PC-9 (cell line): ENCODE measurements at regions of chr20 and their contacts with region 1.

Region 1: GRCh38 chr20:36093025-36093803 is 61.3 kb upstream of the EPB41L1 start:
- DNase-seq: peak in 1 of 2 experiments; percentile 54
- H3K4me3 ChIP-seq: peak overlapping the region; percentile 95
- H3K27ac ChIP-seq: no peak overlapping the region
- H3K4me1 ChIP-seq: peaks cover 58% of the 10 kb centered on the region
- H3K27me3 ChIP-seq: no peaks in the 10 kb centered on the region
- CTCF ChIP-seq: no peak

Region 2: DNA sequence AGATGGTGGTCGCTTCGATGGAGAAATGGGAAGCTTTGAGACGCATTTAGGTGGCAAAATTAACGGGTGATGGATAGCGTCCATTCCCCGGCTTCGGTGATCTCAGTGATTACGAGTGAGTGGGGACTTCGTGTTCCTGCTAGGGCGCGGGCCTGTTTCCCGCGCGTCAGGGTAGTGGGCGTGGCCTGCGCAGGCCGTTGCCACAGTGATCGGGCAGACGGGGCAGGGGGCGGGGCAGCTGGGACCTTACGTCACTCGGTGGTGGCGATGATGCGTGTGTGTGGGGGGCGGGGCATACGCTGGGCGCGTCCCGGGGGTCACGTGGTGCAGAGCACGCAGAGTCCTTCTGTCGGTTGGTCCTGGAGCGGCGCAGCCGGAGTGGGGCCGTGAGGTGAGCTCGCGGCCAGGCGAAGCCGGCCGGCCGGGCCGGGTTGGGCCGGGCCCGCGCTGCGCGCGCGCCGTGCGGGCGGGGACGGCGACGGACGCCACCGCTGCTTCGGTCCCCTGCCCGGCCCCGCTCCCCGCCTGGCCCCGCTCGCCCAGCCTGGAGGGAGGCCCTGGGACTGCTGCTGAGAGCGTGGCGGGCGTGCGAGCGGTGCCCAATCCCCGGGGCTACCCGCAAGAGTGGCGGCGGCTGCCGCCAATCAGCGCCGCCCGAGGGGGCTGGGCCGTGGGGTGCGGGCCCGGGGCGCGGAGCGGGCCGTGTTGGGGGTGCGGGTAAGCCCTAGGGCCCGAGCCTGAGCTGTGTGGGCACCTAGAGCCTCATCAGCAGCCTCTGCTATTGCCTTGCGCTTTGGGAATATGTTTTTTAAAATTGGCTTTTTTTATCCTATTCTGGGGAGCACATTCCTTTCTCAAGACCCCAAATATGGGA is 321.3 kb before region 1 on chr20 and contains the start of gene PHF20:
- CTCF ChIA-PET with region 1: no interaction called
- POLR2A ChIA-PET with region 1: interaction called, 25 read pairs
- intact Hi-C with region 1: no loop called
- DNase-seq: peak; percentile 77 to 98
- H3K4me3 ChIP-seq: peak within 1 kb of the TSS; percentile 87
- H3K27ac ChIP-seq: no peak within 1 kb of the TSS
- H3K4me1 ChIP-seq: peaks cover 24% of the 10 kb centered on the region
- H3K27me3 ChIP-seq: no peaks in the 10 kb centered on the region
- CTCF ChIP-seq: no peak
- total RNA-seq, gene PHF20: 59.8 and 60.2 TPM in 2 replicates

Region 3: DNA sequence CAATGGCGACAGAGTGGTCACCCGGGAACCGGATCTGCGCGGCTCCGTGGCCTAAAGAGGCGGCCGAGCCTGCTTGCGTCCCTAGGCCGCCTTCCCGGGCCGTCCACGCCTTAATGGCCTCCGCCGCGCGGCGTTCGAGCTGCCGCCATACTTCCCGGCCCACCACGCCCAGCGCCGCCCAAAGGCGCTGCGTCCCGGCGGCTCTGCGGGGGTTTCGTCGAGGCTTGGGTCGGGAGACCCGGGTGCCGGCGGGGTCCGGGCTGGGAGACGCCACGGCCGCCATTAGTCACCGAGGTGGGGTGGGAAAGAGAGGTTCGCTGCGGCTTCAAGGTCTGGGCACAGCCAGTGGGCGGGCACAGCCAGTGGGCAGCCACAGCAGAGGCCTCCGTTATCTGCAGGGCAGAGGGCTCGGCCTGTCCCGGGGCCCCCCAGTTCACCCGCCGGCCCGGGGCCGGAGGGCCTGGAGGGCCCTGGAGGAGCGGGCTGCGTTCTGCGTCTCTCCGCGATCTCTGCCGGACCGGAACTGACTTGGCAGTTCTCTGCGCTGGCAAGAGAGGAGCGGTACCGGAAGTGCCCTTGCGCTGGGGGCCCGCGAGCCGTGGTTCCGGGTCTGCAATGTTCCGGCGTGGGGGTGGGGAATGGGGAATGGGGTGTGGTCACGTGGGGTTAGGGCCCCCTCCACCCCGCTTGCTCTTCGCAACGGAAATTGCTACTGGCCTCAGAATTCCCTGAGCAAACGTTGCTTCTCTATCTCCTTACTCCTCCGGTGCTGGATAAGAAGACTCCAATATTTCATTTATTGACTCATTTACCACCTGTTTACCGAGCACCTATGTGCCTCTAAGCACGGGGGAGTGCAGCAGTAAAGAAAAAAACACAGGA is 42.5 kb before region 1 on chr20:
- CTCF ChIA-PET with region 1: no interaction called
- POLR2A ChIA-PET with region 1: interaction called, 8 read pairs
- intact Hi-C with region 1: loop called (anchors 2 kb)
- DNase-seq: peak; percentile 67 to 92
- H3K4me3 ChIP-seq: peak overlapping the region; percentile 95
- H3K27ac ChIP-seq: peak overlapping the region; percentile 79
- H3K4me1 ChIP-seq: peaks cover 26% of the 10 kb centered on the region
- H3K27me3 ChIP-seq: no peaks in the 10 kb centered on the region
- CTCF ChIP-seq: no peak

Region 4: DNA sequence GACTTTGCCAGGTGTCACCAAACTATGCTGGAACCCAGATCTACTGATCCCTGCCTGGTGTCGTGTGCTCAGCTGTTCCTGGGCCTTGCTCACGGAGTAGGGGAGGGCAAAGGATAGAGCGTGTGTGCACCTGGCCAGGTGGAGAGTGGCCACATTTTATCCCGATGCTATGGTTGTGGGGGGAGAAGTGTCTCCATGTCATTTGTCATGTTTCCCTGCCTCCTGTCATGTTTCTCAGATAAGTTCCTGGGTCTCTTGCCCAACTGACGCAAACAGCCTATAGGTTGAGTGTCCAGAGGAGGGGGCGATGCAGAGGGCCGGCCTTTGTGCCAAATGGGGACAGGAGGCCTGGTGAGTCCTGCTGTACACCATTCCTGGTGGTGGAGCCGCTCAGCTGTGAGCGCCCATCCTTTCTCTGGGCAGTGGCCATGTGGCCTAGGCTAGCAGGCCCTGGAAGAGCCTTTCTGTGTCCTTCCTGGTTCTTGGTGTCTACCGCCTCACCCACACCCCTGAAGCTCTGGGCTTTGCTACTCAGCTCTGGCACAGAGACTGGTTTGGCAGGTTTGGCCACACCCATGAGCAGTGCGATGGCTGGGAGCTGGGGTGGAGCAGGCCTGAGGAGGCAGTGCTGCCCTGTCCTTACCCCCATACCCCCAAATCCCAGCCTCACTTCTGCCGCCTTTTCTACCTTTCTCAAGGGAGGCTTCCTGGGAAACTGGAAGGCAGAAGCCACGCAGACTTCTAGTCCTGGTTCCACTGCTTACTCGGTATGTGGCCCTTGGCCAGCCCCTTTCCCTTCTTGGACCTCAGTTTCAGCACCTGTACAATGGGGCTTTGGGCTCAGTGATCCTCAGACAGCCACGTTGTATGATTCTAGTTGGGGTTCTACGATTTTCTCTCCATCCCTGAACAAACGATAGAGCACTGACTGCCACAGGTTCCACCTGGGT is 29.0 kb after region 1 on chr20:
- CTCF ChIA-PET with region 1: no interaction called
- POLR2A ChIA-PET with region 1: interaction called, 3 read pairs
- intact Hi-C with region 1: loop called (anchors 2 kb)
- DNase-seq: peak; percentile 91 to 94
- H3K4me3 ChIP-seq: no peak overlapping the region
- H3K27ac ChIP-seq: peak overlapping the region; percentile 73
- H3K4me1 ChIP-seq: peaks cover 24% of the 10 kb centered on the region
- H3K27me3 ChIP-seq: no peaks in the 10 kb centered on the region
- CTCF ChIP-seq: no peak

Region 5: GRCh38 chr20:36128463-36129159 is 35.4 kb after region 1 on chr20:
- CTCF ChIA-PET with region 1: no interaction called
- POLR2A ChIA-PET with region 1: interaction called, 13 read pairs
- intact Hi-C with region 1: loop called (anchors 2 kb)
- DNase-seq: peak; percentile 25 to 73
- H3K4me3 ChIP-seq: no peak overlapping the region
- H3K27ac ChIP-seq: peak overlapping the region; percentile 63
- H3K4me1 ChIP-seq: peaks cover 29% of the 10 kb centered on the region
- H3K27me3 ChIP-seq: no peaks in the 10 kb centered on the region
- CTCF ChIP-seq: no peak